Astrocyte of the cerebellum (primary cell): ENCODE measurements at regions of chr1 and their contacts with region 1.

Region 1: DNA sequence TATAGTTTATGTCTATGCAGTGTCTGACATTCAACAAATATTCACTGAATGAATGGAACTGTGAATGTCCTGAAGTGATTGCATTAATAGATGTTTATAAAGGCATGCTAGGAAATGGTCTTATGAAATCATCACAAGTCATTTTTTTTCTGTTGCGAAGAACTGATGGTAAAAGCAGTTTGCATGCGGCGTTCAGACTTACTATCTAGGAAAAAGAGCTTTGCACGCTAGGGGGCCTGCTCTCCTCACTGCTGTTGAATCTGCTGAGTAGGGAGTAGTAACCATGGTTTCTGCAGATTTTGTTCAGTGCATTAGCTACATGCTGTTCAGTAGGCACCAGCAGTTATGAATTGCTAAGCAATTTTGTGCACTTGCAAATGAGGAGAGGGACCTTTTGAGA is 57.9 kb downstream of the CENPF start:
- DNase-seq: peak; percentile 88
- H3K4me3 ChIP-seq: no peak overlapping the region
- CTCF ChIP-seq: peak; percentile 84

Region 2: DNA sequence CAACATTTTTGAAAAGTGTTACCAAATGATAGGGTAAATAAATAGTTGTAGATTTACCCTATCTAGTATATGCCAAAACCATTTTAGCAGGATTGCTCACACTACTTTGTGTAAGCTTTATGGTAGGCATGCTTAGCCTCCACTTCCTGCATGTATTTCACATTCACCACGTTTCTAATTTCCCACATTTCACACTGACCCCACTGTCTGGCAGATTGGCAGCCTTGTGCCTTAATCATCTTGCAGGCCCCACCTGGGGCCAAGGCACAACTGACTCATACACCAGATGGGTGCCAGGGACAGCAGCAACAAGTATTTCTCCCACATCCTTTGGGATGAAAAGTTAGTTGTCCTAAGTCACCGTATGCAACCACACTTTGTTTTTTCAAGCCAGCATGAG is 79.1 kb before region 1 on chr1:
- in situ Hi-C with region 1: no loop called
- DNase-seq: peak; percentile 66
- H3K4me3 ChIP-seq: no peak overlapping the region
- CTCF ChIP-seq: no peak

Region 3: GRCh38 chr1:215393481-215393880 is 732.6 kb after region 1 on chr1:
- in situ Hi-C with region 1: loop called (anchors 10 kb)
- DNase-seq: no peak
- H3K4me3 ChIP-seq: no peak overlapping the region
- CTCF ChIP-seq: no peak

Region 4: GRCh38 chr1:215507119-215507518 is 846.3 kb after region 1 on chr1:
- in situ Hi-C with region 1: loop called (anchors 10 kb)
- DNase-seq: peak; percentile 28
- H3K4me3 ChIP-seq: no peak overlapping the region
- CTCF ChIP-seq: no peak